ENCODE measurements at regions of chr13 and their contacts with region 1.

Region 1: GRCh38 chr13:61255035-61255796 is 160.4 kb downstream of the PCDH20 start:
- DNase-seq: peak in 1 of 2 experiments; percentile 18
- H3K4me3 ChIP-seq: no peak overlapping the region
- H3K4me3 Mint-ChIP-seq: no peak overlapping the region
- H3K27ac Mint-ChIP-seq: no peak overlapping the region
- H3K4me1 ChIP-seq: no peaks in the 10 kb centered on the region
- H3K4me1 Mint-ChIP-seq: no peaks in the 10 kb centered on the region
- H3K27me3 ChIP-seq: no peaks in the 10 kb centered on the region
- H3K27me3 Mint-ChIP-seq: peaks cover 4% of the 10 kb centered on the region
- CTCF ChIP-seq: peak in 1 of 2 experiments; percentile 52

Region 2: DNA sequence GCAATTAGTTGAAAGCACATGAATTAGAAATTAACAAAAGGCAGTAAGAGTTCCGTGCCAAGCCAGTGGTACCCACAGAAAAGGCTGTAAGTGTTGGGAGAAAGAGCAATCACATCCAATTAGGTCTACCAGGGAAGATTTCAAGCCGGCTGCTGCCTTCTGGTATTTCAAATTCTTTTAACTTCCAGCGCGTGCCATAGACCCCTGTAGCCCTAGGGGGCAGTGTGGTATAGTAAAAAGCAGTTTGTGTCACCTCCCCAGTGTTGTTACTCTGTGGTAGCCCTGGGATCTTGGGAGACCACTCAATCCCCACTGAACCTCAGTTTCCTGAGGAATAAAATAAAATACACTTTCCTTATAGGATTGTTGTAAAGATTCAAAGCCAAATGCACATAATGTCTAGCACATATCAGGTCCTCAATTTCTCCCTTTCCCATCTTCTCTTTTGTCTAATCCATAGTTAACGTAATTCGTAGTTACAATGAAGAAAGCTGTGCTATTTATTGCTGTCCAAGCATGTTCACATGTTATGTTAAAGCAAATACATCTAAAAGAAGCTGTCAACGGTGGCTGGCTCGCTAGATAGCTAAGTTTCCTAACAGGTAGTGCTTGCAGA is 628.0 kb before region 1 on chr13:
- CTCF ChIA-PET with region 1: interaction called, 3 read pairs
- POLR2A ChIA-PET with region 1: no interaction called
- intact Hi-C with region 1: loop called (anchors 1 kb)
- DNase-seq: peak; percentile 44 to 71
- H3K4me3 ChIP-seq: no peak overlapping the region
- H3K4me3 Mint-ChIP-seq: no peak overlapping the region
- H3K27ac Mint-ChIP-seq: no peak overlapping the region
- H3K4me1 ChIP-seq: no peaks in the 10 kb centered on the region
- H3K4me1 Mint-ChIP-seq: no peaks in the 10 kb centered on the region
- H3K27me3 ChIP-seq: no peaks in the 10 kb centered on the region; the same call in 1 of the 2 replicates
- H3K27me3 Mint-ChIP-seq: peaks cover 27% of the 10 kb centered on the region
- CTCF ChIP-seq: peak; percentile 78 to 81

Region 3: DNA sequence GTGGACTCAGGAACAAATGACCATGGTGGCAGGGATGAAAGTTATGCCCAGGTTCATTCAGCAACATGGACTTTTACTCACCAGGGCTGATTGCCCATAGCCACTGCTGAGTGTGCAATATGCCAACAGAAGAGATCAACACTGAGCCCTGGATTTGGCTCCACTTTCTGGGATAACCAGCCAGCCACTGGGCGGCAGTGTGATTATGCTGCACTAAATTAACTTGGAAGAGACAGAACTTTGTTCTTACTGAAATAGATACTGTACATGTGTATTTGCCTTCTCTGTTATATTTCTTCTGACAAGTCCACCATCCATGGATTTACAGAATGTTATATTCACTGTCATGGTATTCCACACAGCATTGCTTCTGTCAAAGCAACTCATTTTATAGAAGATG is 600.8 kb before region 1 on chr13:
- CTCF ChIA-PET with region 1: no interaction called
- POLR2A ChIA-PET with region 1: no interaction called
- intact Hi-C with region 1: loop called (anchors 1 kb)
- DNase-seq: peak in 1 of 2 experiments; percentile 42
- H3K4me3 ChIP-seq: no peak overlapping the region
- H3K4me3 Mint-ChIP-seq: no peak overlapping the region
- H3K27ac Mint-ChIP-seq: no peak overlapping the region
- H3K4me1 ChIP-seq: no peaks in the 10 kb centered on the region
- H3K4me1 Mint-ChIP-seq: no peaks in the 10 kb centered on the region
- H3K27me3 ChIP-seq: no peaks in the 10 kb centered on the region; the same call in 1 of the 2 replicates
- H3K27me3 Mint-ChIP-seq: peaks cover 20% of the 10 kb centered on the region
- CTCF ChIP-seq: peak; percentile 58 to 77

Region 4: DNA sequence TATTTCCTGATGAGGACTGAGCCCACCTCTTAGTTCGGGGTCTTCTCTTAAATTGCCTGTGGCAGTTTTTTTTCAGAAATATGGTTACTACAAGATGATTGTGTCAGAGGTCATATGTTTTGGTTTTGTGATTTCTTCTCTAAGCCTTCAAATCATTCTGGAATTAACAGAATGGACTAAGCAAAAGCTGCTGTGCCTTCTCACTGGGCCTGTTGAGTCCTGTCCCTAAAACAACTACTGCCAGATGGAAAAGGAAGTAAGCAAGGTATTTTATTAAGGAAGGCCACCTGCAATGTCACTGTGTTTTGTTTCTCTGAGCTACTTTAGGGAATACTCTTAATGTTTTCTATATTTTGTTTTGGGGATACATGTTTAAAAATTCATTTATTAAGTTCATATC is 310.4 kb before region 1 on chr13:
- CTCF ChIA-PET with region 1: no interaction called
- POLR2A ChIA-PET with region 1: no interaction called
- intact Hi-C with region 1: no loop called
- DNase-seq: no peak
- H3K4me3 ChIP-seq: no peak overlapping the region
- H3K4me3 Mint-ChIP-seq: no peak overlapping the region
- H3K27ac Mint-ChIP-seq: no peak overlapping the region
- H3K4me1 ChIP-seq: no peaks in the 10 kb centered on the region
- H3K4me1 Mint-ChIP-seq: no peaks in the 10 kb centered on the region
- H3K27me3 ChIP-seq: no peaks in the 10 kb centered on the region; the same call in 1 of the 2 replicates
- H3K27me3 Mint-ChIP-seq: no peaks in the 10 kb centered on the region
- CTCF ChIP-seq: no peak

Region 5: DNA sequence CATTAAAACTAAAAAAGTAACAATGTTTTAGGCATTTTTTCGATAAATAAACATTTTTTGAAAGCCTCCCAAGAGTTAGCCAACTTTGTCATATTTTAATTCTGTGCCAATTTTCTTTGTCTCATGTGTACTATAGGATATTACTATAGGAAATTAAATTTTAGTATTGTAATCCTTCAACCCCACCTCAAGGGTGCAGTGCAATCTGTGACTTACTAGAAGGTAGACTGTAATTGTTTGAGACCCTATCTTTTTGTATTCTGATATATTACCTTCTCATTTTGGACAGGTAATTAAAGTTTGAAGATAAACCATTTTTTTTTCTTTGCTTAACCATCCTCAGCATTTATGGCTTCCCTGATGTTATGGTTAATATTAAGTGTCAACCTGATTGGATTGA is 297.4 kb before region 1 on chr13:
- CTCF ChIA-PET with region 1: no interaction called
- POLR2A ChIA-PET with region 1: no interaction called
- intact Hi-C with region 1: loop called (anchors 5 kb)
- DNase-seq: no peak
- H3K4me3 ChIP-seq: no peak overlapping the region
- H3K4me3 Mint-ChIP-seq: no peak overlapping the region
- H3K27ac Mint-ChIP-seq: no peak overlapping the region
- H3K4me1 ChIP-seq: no peaks in the 10 kb centered on the region
- H3K4me1 Mint-ChIP-seq: no peaks in the 10 kb centered on the region
- H3K27me3 ChIP-seq: no peaks in the 10 kb centered on the region
- H3K27me3 Mint-ChIP-seq: no peaks in the 10 kb centered on the region
- CTCF ChIP-seq: no peak

Region 6: DNA sequence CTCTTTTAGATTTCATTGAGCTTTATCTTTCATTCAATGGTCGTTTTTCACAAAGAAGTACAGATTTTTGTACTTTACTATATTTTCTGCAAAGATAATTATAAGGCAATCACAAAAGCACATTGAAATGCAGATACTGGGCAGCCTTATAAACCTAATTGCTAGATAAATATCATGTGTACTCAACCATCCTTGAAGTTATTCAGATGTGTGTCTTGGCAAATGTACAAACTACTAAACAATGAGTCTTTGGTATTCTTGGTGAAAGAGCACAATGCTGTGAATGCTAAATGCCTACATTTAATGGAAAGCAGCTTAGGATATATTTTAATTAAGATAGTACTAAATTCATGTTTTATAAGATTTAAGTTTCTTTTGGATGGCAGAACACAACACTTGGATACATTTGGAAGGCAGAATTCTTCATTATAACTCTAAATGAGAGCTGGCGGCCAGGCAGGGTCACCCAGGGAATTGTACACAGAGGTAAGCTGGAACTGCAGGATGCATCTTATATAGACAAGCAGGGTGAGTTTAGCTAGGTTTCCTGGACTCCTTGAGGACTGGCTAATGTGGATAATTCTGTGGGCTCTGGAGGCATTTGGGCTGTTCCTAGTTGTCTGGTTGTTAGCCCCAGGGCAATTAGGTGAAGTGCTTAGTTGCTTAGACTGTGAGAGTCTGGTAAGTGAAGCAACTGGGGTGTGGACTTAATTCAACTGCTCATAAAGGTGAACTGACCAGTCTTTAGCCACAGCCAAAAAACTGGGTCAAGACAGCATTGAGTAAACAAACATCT is 126.2 kb before region 1 on chr13:
- CTCF ChIA-PET with region 1: no interaction called
- POLR2A ChIA-PET with region 1: no interaction called
- intact Hi-C with region 1: loop called (anchors 1 kb)
- DNase-seq: no peak
- H3K4me3 ChIP-seq: no peak overlapping the region
- H3K4me3 Mint-ChIP-seq: no peak overlapping the region
- H3K27ac Mint-ChIP-seq: no peak overlapping the region
- H3K4me1 ChIP-seq: peaks cover 18% of the 10 kb centered on the region
- H3K4me1 Mint-ChIP-seq: peaks cover 10% of the 10 kb centered on the region
- H3K27me3 ChIP-seq: no peaks in the 10 kb centered on the region
- H3K27me3 Mint-ChIP-seq: no peaks in the 10 kb centered on the region
- CTCF ChIP-seq: no peak